Gastrocnemius medialis (tissue), 4 donors: ENCODE measurements at regions of chr21 and their contacts with region 1.

Region 1: GRCh38 chr21:17387030-17387617 is 125.7 kb upstream of the CXADR start:
- DNase-seq: no peak
- ATAC-seq: peak in 1 of 2 donors; percentile 33
- H3K4me3 ChIP-seq: no peak overlapping the region
- H3K27ac ChIP-seq: no peak overlapping the region
- H3K4me1 ChIP-seq: no peaks in the 10 kb centered on the region
- H3K27me3 ChIP-seq: no peaks in the 10 kb centered on the region
- CTCF ChIP-seq: peak; percentile 47 to 74 (median 57)
- POLR2A ChIP-seq: no peak

Region 2: GRCh38 chr21:17554679-17555465 is 167.7 kb after region 1 on chr21:
- in situ Hi-C with region 1: loop called in 2 of 4 experiments (anchors 25 kb)
- intact Hi-C with region 1: loop called (anchors 10 kb)
- DNase-seq: no peak
- ATAC-seq: no peak
- H3K4me3 ChIP-seq: no peak overlapping the region
- H3K27ac ChIP-seq: no peak overlapping the region
- H3K4me1 ChIP-seq: no peaks in the 10 kb centered on the region
- H3K27me3 ChIP-seq: no peaks in the 10 kb centered on the region
- CTCF ChIP-seq: peak in 1 of 5 experiments; percentile 19
- POLR2A ChIP-seq: no peak

Region 3: GRCh38 chr21:17585875-17586450 is 198.8 kb after region 1 on chr21:
- in situ Hi-C with region 1: loop called in 1 of 4 experiments (anchors 10 kb)
- intact Hi-C with region 1: loop called (anchors 2 kb)
- DNase-seq: no peak
- ATAC-seq: no peak
- H3K4me3 ChIP-seq: no peak overlapping the region
- H3K27ac ChIP-seq: no peak overlapping the region
- H3K4me1 ChIP-seq: no peaks in the 10 kb centered on the region
- H3K27me3 ChIP-seq: no peaks in the 10 kb centered on the region
- CTCF ChIP-seq: peak in 2 of 5 experiments; percentile 39 to 46
- POLR2A ChIP-seq: no peak